Heart right ventricle (tissue), 16 donors: ENCODE measurements at regions of chr16 and their contacts with region 1.

Region 1: DNA sequence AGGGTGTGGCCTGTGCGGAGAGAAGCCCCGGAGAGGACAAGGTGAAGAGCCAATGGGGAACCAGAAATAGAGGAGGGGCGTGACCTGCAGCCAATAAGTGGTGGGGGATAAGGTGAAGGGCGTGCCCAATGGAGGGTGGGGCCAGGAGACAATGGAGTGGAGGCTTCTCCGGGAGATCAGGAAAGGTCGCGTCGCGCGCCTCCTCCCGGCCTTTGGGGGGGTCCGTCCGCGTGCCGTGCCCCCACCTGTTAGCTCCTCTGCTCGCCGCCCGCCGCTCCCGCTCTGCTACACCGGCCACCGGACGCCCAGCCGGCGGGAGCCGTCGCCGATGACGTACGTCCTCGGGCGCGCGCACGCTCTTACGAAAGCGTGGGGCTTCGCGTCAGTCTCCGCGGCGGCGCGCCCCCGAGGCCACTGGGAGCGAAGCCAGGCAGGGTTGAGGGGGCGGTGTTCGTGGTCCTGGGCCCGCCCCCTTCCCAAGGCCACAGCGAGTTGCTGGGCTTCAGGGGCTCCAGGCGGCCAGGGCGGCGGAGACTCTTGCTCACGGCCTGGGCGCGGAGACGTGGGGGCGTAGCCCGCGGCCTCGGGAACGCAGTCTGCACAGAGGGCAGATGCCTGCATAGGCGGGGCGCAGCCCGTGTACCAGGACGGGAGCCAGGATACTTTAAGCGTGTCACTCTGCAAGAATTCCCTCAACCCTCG is at the start of gene MATCAP1:
- DNase-seq: peak; percentile 94 to 97
- ATAC-seq: peak; percentile 94 to 96 (median 95)
- H3K4me3 ChIP-seq: peak within 1 kb of the TSS; percentile 39 to 84 (median 72)
- H3K27ac ChIP-seq: peak within 1 kb of the TSS; percentile 89 to 99 (median 97)
- H3K4me1 ChIP-seq: peaks cover 12 to 50% (median 32%) of the 10 kb centered on the region in 9 donors
- H3K27me3 ChIP-seq: peaks cover 0 to 3% (median 0%) of the 10 kb centered on the region in 7 donors
- CTCF ChIP-seq: no peak
- total RNA-seq, gene MATCAP1: 8.0 to 15.2 (median 12.1) TPM

Region 2: DNA sequence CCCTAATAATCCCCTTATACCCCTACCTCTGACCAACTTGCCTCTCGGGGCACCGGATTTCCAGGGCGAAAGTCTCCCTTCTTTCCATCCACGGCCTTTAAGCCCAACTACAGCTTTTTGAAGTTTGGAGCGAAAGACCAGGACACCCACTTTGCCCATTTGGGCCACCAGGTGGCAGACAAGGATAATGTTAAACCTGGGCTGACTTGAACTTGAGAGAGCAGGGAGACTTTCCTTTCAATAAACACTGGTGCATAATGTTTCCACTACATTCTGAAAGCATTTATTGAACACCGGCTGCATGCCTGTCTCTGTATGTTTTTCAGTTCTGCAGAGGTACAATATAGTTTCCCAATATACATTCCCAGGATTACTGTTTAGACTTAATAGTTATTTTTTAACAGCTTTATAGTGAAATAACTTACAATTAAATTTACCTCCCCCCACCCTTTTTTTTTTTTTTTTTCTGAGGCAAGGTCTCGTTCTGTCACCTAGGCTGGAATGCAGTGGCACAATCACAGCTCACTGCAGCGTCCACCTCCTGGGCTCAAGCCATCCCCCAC is 229.6 kb before region 1 on chr16:
- intact Hi-C with region 1: loop called in 1 of 10 experiments (anchors 10 kb)
- DNase-seq: peak; percentile 64 to 70
- ATAC-seq: peak in 7 of 8 donors; percentile 55 to 82 (median 76)
- H3K4me3 ChIP-seq: no peak overlapping the region
- H3K27ac ChIP-seq: no peak overlapping the region
- H3K4me1 ChIP-seq: peaks cover 0 to 4% (median 2%) of the 10 kb centered on the region in 9 donors
- H3K27me3 ChIP-seq: peaks cover 0 to 46% (median 10%) of the 10 kb centered on the region in 7 donors
- CTCF ChIP-seq: peak; percentile 63 to 83 (median 79)

Region 3: GRCh38 chr16:66977341-66978113 is 206.3 kb before region 1 on chr16:
- intact Hi-C with region 1: loop called in 8 of 10 experiments (anchors 1 to 10 kb)
- DNase-seq: peak; percentile 88 to 91
- ATAC-seq: peak; percentile 94 to 97 (median 96)
- H3K4me3 ChIP-seq: no peak overlapping the region
- H3K27ac ChIP-seq: no peak overlapping the region
- H3K4me1 ChIP-seq: peaks cover 0 to 7% (median 0%) of the 10 kb centered on the region in 9 donors
- H3K27me3 ChIP-seq: no peaks in the 10 kb centered on the region
- CTCF ChIP-seq: peak; percentile 90 to 98 (median 96)

Region 4: DNA sequence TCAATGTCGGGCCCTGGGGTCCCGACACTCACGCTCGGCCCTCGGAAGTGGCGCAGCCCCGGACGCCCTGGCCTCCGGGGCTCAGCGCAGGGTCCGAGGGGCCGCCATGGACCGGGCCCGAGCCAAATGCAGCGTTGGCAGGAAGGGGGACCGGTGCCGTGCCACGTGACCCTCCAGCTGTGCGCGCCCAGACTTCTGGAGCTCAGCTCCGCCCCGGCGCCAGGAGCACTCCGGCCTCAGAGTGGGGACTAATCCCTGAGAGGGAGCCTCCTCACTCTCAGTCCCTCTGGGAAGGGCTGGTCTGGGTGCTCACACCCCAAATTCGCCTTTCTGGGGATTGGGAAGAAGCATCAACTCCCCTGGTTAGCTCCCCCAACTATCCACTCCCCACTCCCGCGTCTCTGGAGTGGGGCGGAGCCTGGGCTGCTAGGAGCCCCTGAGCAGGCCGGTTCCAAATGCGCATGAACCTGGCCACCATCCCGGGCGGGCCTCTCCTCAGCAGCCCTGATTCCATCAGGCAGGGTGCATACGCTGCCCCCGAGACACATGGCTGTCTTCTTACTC is 32.9 kb before region 1 on chr16 and contains the start of gene B3GNT9:
- intact Hi-C with region 1: loop called in 3 of 10 experiments (anchors 1 to 5 kb)
- DNase-seq: peak; percentile 76 to 80
- ATAC-seq: peak; percentile 62 to 90 (median 82)
- H3K4me3 ChIP-seq: peak within 1 kb of the TSS; percentile 49 to 87 (median 68)
- H3K27ac ChIP-seq: peak within 1 kb of the TSS; percentile 64 to 90 (median 83)
- H3K4me1 ChIP-seq: peaks cover 4 to 34% (median 25%) of the 10 kb centered on the region in 9 donors
- H3K27me3 ChIP-seq: peaks cover 0 to 30% (median 0%) of the 10 kb centered on the region in 7 donors
- CTCF ChIP-seq: no peak
- total RNA-seq, gene B3GNT9: 7.4 to 17.6 (median 9.6) TPM

Region 5: DNA sequence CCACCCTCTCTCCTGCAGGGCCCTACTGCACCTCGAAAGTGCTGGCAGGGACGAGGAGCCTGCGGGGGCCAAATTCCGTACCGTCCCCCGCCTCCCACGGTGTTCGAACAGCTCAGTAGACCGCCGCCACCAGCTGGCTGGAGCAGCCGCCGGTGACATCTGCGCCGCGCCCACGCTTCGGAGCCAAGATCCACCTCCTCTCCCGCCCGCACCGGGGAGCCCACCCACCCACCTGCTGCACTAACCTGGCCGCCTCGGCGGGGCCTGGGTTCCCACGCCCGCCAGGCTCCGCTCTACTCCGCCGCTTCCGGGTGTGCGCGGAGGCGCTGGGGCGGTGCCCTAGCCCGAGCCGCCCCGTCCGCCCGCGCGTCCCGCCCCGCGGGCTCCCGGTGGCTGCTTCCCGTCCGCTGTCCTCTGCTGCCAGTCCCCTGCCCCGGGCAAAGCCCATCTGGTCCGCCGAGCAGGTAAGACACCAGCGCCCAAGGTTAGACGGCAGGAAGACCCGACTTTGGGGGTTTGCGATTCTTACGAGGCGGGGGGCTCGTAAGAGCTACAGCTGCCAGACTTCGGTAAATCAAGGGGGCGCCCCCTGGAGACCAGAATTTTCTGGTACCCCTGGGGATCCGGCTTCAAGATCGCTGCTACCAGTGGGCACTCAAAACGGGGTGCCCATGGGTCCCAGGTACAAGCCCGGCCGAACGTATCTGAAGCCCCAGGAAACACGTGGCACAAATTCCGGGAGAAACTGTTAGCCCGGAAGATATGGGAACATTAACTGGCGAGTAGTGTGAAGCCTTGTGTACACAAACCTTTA is 24.0 kb before region 1 on chr16 and contains the starts of genes FBXL8 and TRADD:
- intact Hi-C with region 1: loop called in 2 of 10 experiments (anchors 1 to 2 kb)
- DNase-seq: peak; percentile 68 to 79
- ATAC-seq: peak; percentile 68 to 84 (median 73)
- H3K4me3 ChIP-seq: peak within 1 kb of the TSS; percentile 81 to 99 (median 91)
- H3K27ac ChIP-seq: peak within 1 kb of the TSS; percentile 3 to 95 (median 86)
- H3K4me1 ChIP-seq: peaks cover 34 to 71% (median 59%) of the 10 kb centered on the region in 9 donors
- H3K27me3 ChIP-seq: peaks cover 0 to 36% (median 18%) of the 10 kb centered on the region in 7 donors
- CTCF ChIP-seq: peak in 7 of 9 donors; percentile 0 to 59 (median 47)
- total RNA-seq, gene FBXL8: 3.9 to 10.5 (median 5.0) TPM
- total RNA-seq, gene TRADD: 4.8 to 12.4 (median 5.7) TPM

Region 6: GRCh38 chr16:67170168-67170947 is 13.4 kb before region 1 on chr16 and contains the start of gene NOL3:
- intact Hi-C with region 1: no loop called
- DNase-seq: peak; percentile 86 to 89
- ATAC-seq: peak; percentile 65 to 81 (median 75)
- H3K4me3 ChIP-seq: peak within 1 kb of the TSS; percentile 30 to 60 (median 54)
- H3K27ac ChIP-seq: peak within 1 kb of the TSS; percentile 69 to 98 (median 94)
- H3K4me1 ChIP-seq: peaks cover 12 to 68% (median 40%) of the 10 kb centered on the region in 9 donors
- H3K27me3 ChIP-seq: peaks cover 0 to 73% (median 6%) of the 10 kb centered on the region in 7 donors
- CTCF ChIP-seq: no peak
- total RNA-seq, gene NOL3: 71.8 to 92.2 (median 79.9) TPM

Region 7: GRCh38 chr16:67246934-67247697 is 63.3 kb after region 1 on chr16 and contains the start of gene FHOD1:
- intact Hi-C with region 1: loop called in 1 of 10 experiments (anchors 5 kb)
- DNase-seq: peak; percentile 98 to 99
- ATAC-seq: peak; percentile 77 to 89 (median 83)
- H3K4me3 ChIP-seq: peak within 1 kb of the TSS; percentile 69 to 97 (median 84)
- H3K27ac ChIP-seq: peak within 1 kb of the TSS; percentile 93 to 99 (median 96)
- H3K4me1 ChIP-seq: peaks cover 25 to 69% (median 58%) of the 10 kb centered on the region in 9 donors
- H3K27me3 ChIP-seq: peaks cover 0 to 34% (median 0%) of the 10 kb centered on the region in 7 donors
- CTCF ChIP-seq: peak in 1 of 9 donors; percentile 6
- total RNA-seq, gene FHOD1: 11.6 to 26.2 (median 19.1) TPM